PC-9 (cell line): ENCODE measurements at regions of chr6 and their contacts with region 1.

Region 1: DNA sequence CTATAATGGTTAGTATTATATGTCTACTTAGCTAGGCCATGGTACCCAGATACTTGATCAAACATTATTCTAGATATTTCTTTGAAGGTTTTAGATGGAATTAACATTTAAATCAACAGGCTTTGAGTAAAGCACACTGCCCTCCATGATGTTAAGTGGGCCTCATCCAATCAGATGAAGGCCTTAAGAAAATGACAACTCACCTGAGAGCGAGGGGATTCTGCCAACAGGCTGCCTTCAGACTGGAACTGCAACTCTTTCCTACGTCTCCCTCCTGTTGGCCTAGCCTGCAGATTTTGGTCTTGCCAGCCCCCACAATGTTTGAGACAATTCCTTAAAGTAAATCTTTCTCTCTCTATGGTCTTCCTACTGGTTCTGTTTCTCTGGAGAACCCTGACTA is 137.3 kb downstream of the AHI1 start:
- DNase-seq: no peak
- H3K4me3 ChIP-seq: no peak overlapping the region
- H3K27ac ChIP-seq: no peak overlapping the region
- H3K4me1 ChIP-seq: no peaks in the 10 kb centered on the region
- H3K27me3 ChIP-seq: no peaks in the 10 kb centered on the region
- CTCF ChIP-seq: no peak

Region 2: DNA sequence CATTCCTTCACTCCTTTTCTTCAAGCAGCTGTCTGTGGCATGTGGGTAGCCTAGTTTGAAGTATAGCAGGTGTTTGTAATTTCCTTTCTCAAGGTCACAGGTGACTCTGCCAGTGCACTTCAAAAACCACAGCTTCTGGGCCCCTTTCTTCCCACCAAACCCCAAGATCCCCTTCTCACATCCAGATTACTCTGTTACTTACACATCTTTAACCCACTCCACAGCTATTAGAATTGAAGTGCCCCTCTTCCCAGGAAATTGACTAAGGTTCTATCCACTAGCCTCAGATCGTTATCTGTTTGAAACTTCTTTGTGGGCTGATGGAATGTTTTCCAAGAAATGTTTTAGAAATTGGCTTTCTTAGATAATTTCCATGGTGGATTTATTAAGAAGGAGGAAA is 13.5 kb before region 1 on chr6:
- CTCF ChIA-PET with region 1: interaction called, 11 read pairs
- POLR2A ChIA-PET with region 1: no interaction called
- intact Hi-C with region 1: no loop called
- DNase-seq: no peak
- H3K4me3 ChIP-seq: no peak overlapping the region
- H3K27ac ChIP-seq: no peak overlapping the region
- H3K4me1 ChIP-seq: no peaks in the 10 kb centered on the region
- H3K27me3 ChIP-seq: no peaks in the 10 kb centered on the region
- CTCF ChIP-seq: no peak